ENCODE measurements at regions of chr1 and their contacts with region 1.

Region 1: DNA sequence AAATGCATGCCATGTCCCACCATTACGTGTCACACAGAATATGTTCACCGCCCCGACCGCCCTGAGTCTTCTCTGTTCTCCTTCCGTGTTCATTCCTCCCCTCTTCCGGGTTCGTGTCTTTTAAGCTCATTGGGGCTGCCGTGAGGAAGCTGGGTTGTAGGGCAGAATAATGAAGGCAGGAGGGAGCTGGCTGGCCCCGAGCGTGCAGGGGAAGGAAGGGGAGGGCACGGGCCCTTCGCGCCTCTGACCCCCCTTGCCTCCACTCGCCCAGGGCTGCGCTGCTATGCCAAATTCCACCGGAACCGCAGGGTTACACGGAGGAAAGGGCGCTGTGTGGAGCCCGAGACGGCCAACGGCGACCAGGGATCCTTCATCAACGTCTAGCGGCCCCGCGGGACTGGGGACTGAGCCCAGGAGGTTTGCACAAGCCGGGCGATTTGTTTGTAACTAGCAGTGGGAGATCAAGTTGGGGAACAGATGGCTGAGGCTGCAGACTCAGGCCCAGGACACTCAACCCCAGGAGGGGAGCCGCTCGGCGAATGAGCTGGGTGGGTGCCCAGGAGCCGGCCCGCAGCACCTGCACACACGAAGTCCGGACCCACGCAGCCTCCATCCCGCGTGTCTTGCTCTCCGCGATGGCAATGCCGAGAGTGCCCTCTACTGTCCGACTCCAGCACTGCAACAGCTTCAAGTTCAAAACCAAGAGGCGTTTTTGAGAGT is 16.5 kb upstream of the AGTRAP start:
- DNase-seq: peak; percentile 91
- H3K4me3 ChIP-seq: peak overlapping the region in 3 of 4 donors; percentile 34 to 43 (median 42)
- H3K27ac ChIP-seq: peak overlapping the region; percentile 25 to 53 (median 46)
- H3K4me1 ChIP-seq: peaks cover 0 to 11% (median 9%) of the 10 kb centered on the region in 4 donors
- H3K27me3 ChIP-seq: peaks cover 0 to 5% (median 0%) of the 10 kb centered on the region in 3 donors
- CTCF ChIP-seq: peak; percentile 76 to 98 (median 92)
- EP300 ChIP-seq: no peak
- POLR2A ChIP-seq: no peak

Region 2: GRCh38 chr1:11670747-11671146 is 48.7 kb before region 1 on chr1:
- intact Hi-C with region 1: loop called (anchors 2 kb)
- DNase-seq: no peak
- H3K4me3 ChIP-seq: no peak overlapping the region
- H3K27ac ChIP-seq: no peak overlapping the region
- H3K4me1 ChIP-seq: no peaks in the 10 kb centered on the region
- H3K27me3 ChIP-seq: no peaks in the 10 kb centered on the region
- CTCF ChIP-seq: no peak
- EP300 ChIP-seq: no peak
- POLR2A ChIP-seq: no peak

Measured in sigmoid colon (tissue), 7 donors.